Esophagus squamous epithelium (tissue), 5 donors: ENCODE measurements at regions of chr17 and their contacts with region 1.

Region 1: DNA sequence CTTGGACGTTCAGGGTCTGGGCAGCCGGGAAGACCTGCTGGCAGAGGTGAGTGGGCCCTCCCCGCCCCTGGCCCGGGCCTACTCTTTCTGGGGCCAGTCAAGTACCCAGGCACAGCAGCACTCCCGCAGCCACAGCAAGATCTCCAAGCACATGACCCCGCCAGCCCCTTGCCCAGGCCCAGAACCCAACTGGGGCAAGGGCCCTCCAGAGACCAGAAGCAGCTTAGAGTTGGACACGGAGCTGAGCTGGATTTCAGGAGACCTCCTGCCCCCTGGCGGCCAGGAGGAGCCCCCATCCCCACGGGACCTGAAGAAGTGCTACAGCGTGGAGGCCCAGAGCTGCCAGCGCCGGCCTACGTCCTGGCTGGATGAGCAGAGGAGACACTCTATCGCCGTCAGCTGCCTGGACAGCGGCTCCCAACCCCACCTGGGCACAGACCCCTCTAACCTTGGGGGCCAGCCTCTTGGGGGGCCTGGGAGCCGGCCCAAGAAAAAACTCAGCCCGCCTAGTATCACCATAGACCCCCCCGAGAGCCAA is 8.6 kb upstream of the ABCC3 start:
- DNase-seq: no peak
- H3K4me3 ChIP-seq: no peak overlapping the region
- H3K27ac ChIP-seq: no peak overlapping the region
- H3K4me1 ChIP-seq: peaks cover 0 to 16% (median 0%) of the 10 kb centered on the region in 3 donors
- H3K27me3 ChIP-seq: peaks cover 0 to 73% (median 0%) of the 10 kb centered on the region in 4 donors
- CTCF ChIP-seq: peak; percentile 55 to 74 (median 64)
- POLR2A ChIP-seq: no peak

Region 2: GRCh38 chr17:50482516-50482915 is 143.6 kb before region 1 on chr17:
- intact Hi-C with region 1: loop called (anchors 10 kb)
- DNase-seq: peak; percentile 37
- H3K4me3 ChIP-seq: no peak overlapping the region
- H3K27ac ChIP-seq: peak overlapping the region; percentile 55 to 81 (median 67)
- H3K4me1 ChIP-seq: peaks cover 15 to 53% (median 18%) of the 10 kb centered on the region in 3 donors
- H3K27me3 ChIP-seq: no peaks in the 10 kb centered on the region
- CTCF ChIP-seq: peak; percentile 74 to 96 (median 90)
- POLR2A ChIP-seq: no peak

Region 3: GRCh38 chr17:50681263-50682210 is 55.4 kb after region 1 on chr17:
- intact Hi-C with region 1: loop called (anchors 5 kb)
- DNase-seq: no peak
- H3K4me3 ChIP-seq: no peak overlapping the region
- H3K27ac ChIP-seq: no peak overlapping the region
- H3K4me1 ChIP-seq: peaks cover 3 to 26% (median 10%) of the 10 kb centered on the region in 3 donors
- H3K27me3 ChIP-seq: no peaks in the 10 kb centered on the region
- CTCF ChIP-seq: peak in 5 of 6 experiments; percentile 38 to 69 (median 52)
- POLR2A ChIP-seq: no peak